Activated B cell treated with CpG ODN at 0.5 μM for 24 hours (primary cell): ENCODE measurements at regions of chr1 and their contacts with region 1.

Region 1: DNA sequence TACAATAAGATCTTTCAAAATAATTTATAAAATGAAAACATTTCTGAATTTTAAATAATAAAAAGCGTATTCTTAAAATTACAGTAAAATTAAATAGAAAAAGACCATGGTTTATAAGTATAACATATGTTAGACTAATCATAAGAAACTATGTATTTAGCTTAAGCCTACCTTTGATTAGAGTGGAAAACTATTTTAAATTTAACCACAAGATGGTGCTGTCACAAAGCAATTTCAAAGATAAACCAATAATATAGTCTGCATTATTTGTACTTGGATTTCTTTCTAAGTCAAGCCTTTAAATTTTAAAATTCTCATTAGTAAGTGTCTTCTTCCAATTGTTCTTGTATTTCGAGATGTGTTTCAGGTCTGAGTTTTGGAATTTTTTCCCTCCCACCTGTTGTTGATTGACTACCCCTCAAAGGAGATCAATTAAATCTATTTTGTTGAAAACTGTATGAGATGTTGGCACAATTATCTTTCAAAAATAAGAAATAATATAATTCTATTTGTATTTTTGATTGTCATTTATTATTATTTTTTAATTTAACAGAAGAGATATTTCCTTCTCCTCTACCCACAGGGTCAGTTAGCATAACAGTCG is 459.8 kb downstream of the KCNT2 start:
- DNase-seq: no peak
- ATAC-seq: no peak
- H3K4me3 Mint-ChIP-seq: no peak overlapping the region
- H3K27ac Mint-ChIP-seq: no peak overlapping the region
- H3K4me1 Mint-ChIP-seq: no peaks in the 10 kb centered on the region
- H3K27me3 Mint-ChIP-seq: no peaks in the 10 kb centered on the region
- CTCF ChIP-seq: no peak

Region 2: GRCh38 chr1:196115646-196116045 is 32.8 kb before region 1 on chr1:
- CTCF ChIA-PET with region 1: no interaction called
- POLR2A ChIA-PET with region 1: no interaction called
- intact Hi-C with region 1: no loop called
- DNase-seq: no peak
- ATAC-seq: no peak
- H3K4me3 Mint-ChIP-seq: no peak overlapping the region
- H3K27ac Mint-ChIP-seq: no peak overlapping the region
- H3K4me1 Mint-ChIP-seq: no peaks in the 10 kb centered on the region
- H3K27me3 Mint-ChIP-seq: no peaks in the 10 kb centered on the region
- CTCF ChIP-seq: no peak

Region 3: DNA sequence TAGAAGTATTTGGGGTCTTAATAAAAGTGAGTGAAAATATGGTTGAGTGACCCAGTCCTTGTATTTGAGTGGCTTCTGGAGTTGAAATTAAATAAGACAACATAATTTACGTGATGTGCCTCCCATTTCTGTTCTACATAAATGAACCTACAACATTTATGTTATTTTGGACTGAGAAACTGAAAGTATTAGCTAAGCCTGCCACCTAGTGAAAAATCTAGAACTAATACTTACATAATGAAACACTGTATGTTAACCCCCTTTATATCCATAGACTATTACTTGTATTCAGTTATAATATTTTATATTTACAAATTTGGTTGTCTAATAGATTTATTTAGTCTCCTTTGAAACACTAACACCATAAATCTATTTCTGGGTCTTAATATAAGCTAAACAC is 160.9 kb after region 1 on chr1:
- CTCF ChIA-PET with region 1: no interaction called
- POLR2A ChIA-PET with region 1: no interaction called
- intact Hi-C with region 1: loop called (anchors 10 kb)
- DNase-seq: no peak
- ATAC-seq: no peak
- H3K4me3 Mint-ChIP-seq: no peak overlapping the region
- H3K27ac Mint-ChIP-seq: no peak overlapping the region
- H3K4me1 Mint-ChIP-seq: no peaks in the 10 kb centered on the region
- H3K27me3 Mint-ChIP-seq: no peaks in the 10 kb centered on the region
- CTCF ChIP-seq: no peak

Region 4: DNA sequence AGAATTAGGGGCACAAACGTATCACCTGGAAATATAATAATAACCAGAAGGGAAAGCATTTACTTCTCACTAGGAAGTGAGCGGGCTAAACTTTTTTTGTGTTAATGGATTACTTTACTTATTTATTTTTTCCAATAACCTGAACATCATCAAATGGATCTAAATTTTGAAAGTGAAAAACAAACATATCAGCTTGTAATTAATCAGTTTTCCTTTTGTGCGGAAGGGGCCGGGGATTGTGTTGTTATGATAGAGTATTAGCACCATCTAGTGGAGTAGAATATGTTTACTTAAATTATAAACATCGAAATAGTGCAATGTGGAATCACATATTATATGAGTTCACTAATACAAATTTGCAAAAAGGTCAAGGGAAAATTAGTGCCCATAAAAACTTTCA is 512.4 kb after region 1 on chr1:
- CTCF ChIA-PET with region 1: interaction called, 9 read pairs
- POLR2A ChIA-PET with region 1: no interaction called
- intact Hi-C with region 1: loop called (anchors 1 kb)
- DNase-seq: no peak
- ATAC-seq: no peak
- H3K4me3 Mint-ChIP-seq: no peak overlapping the region
- H3K27ac Mint-ChIP-seq: no peak overlapping the region
- H3K4me1 Mint-ChIP-seq: peaks cover 2% of the 10 kb centered on the region
- H3K27me3 Mint-ChIP-seq: no peaks in the 10 kb centered on the region
- CTCF ChIP-seq: no peak

Region 5: DNA sequence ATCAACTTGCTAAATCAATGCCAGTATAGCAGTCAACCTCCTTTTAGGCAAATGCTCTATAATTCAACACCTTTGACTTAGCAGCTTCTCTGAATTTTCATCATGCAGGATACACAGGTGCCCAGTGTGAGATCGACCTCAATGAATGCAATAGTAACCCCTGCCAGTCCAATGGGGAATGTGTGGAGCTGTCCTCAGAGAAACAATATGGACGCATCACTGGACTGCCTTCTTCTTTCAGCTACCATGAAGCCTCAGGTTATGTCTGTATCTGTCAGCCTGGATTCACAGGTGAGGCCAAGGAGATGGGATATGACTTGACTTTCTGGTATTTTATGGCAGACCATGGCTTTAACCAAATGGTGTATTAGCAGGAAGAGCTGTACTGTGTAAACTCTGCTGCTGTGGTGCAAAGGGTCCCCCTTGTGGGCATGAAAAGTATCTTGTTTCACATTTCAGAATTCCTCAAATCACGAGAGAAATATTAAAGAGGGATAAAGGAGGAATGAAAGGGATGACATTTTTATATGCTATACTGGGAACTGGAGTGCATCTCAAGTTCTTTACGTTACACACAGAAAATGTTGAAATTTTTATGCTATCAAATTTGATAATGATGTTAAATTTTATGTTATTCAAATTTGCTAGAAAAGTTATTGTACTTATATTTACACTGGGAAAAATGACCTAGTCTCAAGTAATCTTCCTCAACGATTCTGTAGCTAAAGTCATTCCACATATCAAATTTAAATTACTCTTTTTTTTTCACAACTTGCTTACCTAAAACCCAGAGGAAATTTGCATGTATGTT is 1208.5 kb after region 1 on chr1:
- CTCF ChIA-PET with region 1: no interaction called
- POLR2A ChIA-PET with region 1: no interaction called
- intact Hi-C with region 1: loop called (anchors 5 kb)
- DNase-seq: no peak
- ATAC-seq: peak; percentile 25
- H3K4me3 Mint-ChIP-seq: no peak overlapping the region
- H3K27ac Mint-ChIP-seq: no peak overlapping the region
- H3K4me1 Mint-ChIP-seq: no peaks in the 10 kb centered on the region
- H3K27me3 Mint-ChIP-seq: no peaks in the 10 kb centered on the region
- CTCF ChIP-seq: no peak